ENCODE measurements at regions of chr2 and their contacts with region 1.

Region 1: GRCh38 chr2:120109186-120110061 is 96.5 kb downstream of the EPB41L5 start:
- DNase-seq: peak; percentile 13
- H3K4me3 Mint-ChIP-seq: peak overlapping the region; percentile 29
- H3K27ac Mint-ChIP-seq: no peak overlapping the region
- H3K4me1 Mint-ChIP-seq: peaks cover 16% of the 10 kb centered on the region
- H3K27me3 Mint-ChIP-seq: peaks cover 14% of the 10 kb centered on the region

Region 2: GRCh38 chr2:119702918-119703401 is 406.5 kb before region 1 on chr2:
- intact Hi-C with region 1: loop called (anchors 10 kb)
- DNase-seq: peak; percentile 56
- H3K4me3 Mint-ChIP-seq: no peak overlapping the region
- H3K27ac Mint-ChIP-seq: no peak overlapping the region
- H3K4me1 Mint-ChIP-seq: peaks cover 3% of the 10 kb centered on the region
- H3K27me3 Mint-ChIP-seq: peaks cover 2% of the 10 kb centered on the region

Region 3: GRCh38 chr2:120436885-120437603 is 327.6 kb after region 1 on chr2:
- intact Hi-C with region 1: loop called (anchors 1 kb)
- DNase-seq: no peak
- H3K4me3 Mint-ChIP-seq: no peak overlapping the region
- H3K27ac Mint-ChIP-seq: no peak overlapping the region
- H3K4me1 Mint-ChIP-seq: no peaks in the 10 kb centered on the region
- H3K27me3 Mint-ChIP-seq: peaks cover 25% of the 10 kb centered on the region

Region 4: DNA sequence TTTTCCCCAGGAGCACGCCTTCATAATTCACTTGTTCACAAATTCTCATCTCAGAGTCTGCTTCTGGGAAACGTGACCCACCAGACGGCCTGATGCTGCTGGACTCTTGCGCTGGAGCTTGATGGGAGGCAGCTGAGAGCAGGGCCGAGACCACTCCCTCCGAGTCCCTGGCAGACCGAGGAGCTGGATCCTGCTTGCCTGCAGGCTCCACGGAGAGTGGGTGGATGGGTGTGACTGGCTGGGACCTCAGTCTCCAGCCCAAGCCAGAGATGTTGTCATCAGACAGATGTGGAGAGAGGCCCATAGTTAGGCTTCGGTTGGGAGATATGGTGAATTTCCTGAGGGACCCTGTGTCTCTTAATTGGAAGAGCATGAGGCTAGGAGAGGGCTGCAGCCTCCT is 1722.4 kb after region 1 on chr2:
- intact Hi-C with region 1: no loop called
- DNase-seq: no peak
- H3K4me3 Mint-ChIP-seq: no peak overlapping the region
- H3K27ac Mint-ChIP-seq: no peak overlapping the region
- H3K4me1 Mint-ChIP-seq: no peaks in the 10 kb centered on the region
- H3K27me3 Mint-ChIP-seq: peaks cover 2% of the 10 kb centered on the region